ENCODE measurements at regions of chr5 and their contacts with region 1.

Region 1: DNA sequence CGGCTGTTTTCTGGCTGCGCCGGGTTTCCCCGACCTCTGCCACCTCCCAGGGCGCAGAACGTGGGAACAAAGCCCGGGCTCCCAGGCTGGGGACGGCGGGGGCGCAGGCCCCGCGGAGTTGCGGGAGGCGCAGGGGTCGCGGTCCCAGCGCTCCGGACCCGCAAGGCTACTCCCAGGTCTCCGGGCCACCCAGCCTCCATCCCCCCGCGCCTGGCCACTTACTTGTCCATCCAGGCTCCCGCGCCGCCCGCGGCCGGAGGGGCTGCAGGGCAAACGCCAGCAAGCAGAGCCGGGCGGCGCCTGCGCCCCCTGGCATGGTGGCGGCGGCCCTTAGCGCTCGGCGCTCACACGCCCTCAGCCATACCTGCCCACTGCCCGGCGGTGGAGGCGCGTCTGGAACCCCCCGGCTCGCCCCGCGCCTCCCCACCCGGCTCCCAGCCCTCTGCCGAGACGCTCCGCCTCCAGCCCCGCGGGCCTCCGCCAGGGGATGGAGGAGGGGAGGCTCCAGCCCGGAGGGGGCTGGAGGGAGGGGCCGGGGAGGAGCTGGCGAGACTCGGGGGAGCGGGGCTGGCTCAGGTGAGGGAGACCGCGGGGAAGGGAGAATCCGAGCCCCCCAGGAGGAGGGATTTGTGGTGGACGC is at the start of gene ADAM19:
- DNase-seq: peak; percentile 70
- ATAC-seq: peak; percentile 75
- H3K4me3 Mint-ChIP-seq: peak within 1 kb of the TSS; percentile 85
- H3K27ac Mint-ChIP-seq: peak within 1 kb of the TSS; percentile 83
- H3K4me1 Mint-ChIP-seq: peaks cover 46% of the 10 kb centered on the region
- H3K27me3 Mint-ChIP-seq: peaks cover 4% of the 10 kb centered on the region
- total RNA-seq, gene ADAM19: 63.6 to 69.5 TPM

Region 2: DNA sequence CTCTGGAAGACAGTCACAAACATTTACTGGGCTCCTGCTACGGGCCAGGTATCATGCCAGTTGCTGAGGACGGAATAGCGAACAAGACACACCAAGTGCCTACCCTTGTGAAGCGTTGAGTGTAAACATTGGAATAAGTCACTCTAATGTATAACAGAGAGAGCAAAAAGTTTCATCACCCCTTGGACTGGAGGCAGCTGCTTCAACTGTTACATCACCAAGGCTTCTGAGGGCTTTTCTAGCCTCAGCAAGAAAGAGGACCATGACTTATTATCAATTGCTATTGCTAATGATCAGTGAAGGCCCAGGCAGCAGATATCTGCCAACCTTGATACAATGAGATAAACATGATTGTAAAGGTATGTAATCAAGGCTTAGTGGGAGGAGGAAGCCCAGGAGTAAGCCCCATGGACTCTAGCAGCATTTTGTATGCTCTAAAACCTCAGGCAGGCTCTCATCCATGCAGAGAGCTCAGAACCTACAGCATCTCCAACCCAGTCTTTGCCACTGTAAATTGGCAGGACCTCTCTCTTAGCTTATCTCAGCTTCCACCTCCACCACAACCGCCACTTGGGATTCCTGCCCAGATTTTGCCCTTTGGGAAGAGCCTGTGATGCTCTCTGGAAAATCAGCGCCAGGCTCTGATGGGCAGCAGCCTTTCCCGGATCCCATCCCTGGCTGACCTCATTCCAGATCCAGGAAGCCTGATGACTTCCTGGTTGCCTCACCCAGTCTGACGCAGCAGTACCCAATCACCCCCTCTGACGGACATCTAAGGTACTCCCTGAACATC is 54.4 kb before region 1 on chr5:
- CTCF ChIA-PET with region 1: no interaction called
- POLR2A ChIA-PET with region 1: no interaction called
- intact Hi-C with region 1: no loop called
- DNase-seq: no peak
- ATAC-seq: no peak
- H3K4me3 Mint-ChIP-seq: no peak overlapping the region
- H3K27ac Mint-ChIP-seq: no peak overlapping the region
- H3K4me1 Mint-ChIP-seq: peaks cover 22% of the 10 kb centered on the region
- H3K27me3 Mint-ChIP-seq: no peaks in the 10 kb centered on the region

Region 3: GRCh38 chr5:157540707-157541446 is 34.6 kb before region 1 on chr5:
- CTCF ChIA-PET with region 1: interaction called, 3 read pairs
- POLR2A ChIA-PET with region 1: interaction called, 3 read pairs
- intact Hi-C with region 1: loop called (anchors 2 kb)
- DNase-seq: peak; percentile 68
- ATAC-seq: peak; percentile 85
- H3K4me3 Mint-ChIP-seq: peak overlapping the region; percentile 21
- H3K27ac Mint-ChIP-seq: peak overlapping the region; percentile 79
- H3K4me1 Mint-ChIP-seq: peaks cover 73% of the 10 kb centered on the region
- H3K27me3 Mint-ChIP-seq: no peaks in the 10 kb centered on the region

Region 4: DNA sequence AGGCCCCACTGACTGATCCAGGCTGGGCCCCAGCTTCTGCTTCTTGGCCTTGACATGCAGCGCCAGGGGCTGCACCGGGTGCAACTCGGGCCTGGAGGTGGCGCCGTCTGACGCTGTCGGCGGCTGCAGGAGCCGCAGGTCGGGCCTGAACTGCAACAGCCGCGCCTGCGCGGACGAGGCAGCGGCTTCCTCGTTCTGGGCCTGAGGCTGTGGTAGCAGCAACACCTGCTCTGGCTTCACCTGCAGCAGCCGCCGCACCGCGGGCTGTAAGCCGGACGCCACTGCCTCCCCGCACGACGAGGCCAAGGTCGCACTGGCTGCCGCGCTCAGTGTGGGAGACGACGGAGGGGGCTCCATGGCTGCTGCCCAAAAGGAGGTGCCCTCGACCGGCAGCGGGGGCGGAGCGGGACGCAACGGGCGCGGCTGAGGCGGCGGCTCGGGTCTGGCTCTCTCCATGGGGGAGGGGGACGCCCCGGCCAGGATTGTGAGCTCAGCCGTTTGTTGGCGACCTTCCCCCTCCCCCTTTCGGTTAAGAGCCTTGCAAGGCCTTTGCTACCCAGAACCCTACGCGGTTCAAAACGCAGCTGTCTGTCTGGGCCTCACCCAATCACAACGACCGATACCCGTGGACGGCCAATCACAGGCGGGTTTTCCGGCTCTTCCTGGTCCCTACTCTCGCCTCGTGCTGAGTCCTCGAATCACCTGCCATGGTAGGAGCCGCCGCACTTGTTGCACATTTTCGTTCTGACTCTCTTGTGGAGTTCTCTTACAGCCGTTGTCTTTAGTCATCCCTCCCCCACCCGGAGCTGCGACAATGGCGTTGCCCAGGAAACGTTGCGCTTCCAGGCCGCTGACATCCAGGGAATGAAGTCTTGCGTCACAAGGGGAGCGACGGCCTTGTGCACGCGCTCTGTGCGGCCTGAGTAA is 76.4 kb after region 1 on chr5 and contains the start of gene SOX30:
- CTCF ChIA-PET with region 1: no interaction called
- POLR2A ChIA-PET with region 1: no interaction called
- intact Hi-C with region 1: loop called in 1 of 2 experiments (anchors 5 kb)
- DNase-seq: peak; percentile 92
- ATAC-seq: peak; percentile 99
- H3K4me3 Mint-ChIP-seq: peak within 1 kb of the TSS; percentile 69
- H3K27ac Mint-ChIP-seq: peak within 1 kb of the TSS; percentile 83
- H3K4me1 Mint-ChIP-seq: peaks cover 15% of the 10 kb centered on the region
- H3K27me3 Mint-ChIP-seq: no peaks in the 10 kb centered on the region
- total RNA-seq, gene SOX30: 0.18 to 0.44 TPM